Keratinocyte (primary cell): ENCODE measurements at regions of chr9 and their contacts with region 1.

Region 1: DNA sequence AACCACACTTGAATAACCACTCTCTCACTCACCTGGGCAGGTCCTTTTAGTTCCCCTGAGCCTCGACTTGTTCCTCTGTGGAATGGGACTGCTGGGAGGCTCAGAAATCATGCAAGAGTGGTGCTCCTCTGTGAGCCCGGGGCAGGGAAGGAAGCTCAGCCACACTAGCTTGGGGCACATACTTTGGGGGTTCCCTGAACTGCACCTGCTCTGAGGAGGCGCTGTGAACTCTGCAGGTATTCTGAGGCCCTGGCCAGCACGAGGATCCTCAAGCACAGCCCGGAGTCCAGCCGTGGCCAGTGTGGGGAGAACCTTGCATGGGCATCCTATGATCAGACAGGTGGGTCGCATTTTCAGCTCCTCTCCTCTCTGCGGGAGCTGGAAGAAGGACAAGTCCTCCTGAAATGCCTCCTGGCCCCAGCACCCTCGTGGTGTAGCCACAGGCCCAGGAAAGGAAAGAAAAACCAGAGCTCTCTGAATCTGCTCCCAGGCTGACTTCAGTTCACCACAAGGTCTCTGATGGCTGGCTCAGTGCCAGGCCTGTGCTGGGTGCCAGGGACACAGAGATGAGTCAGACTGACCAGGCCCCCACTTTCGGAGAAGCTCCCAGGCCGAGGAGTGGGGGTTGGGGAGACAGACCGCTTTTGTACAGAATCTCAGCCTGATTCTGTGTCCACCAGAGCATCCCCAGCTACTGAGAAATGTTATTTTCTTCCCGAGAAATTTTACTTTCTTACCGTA is 11.9 kb downstream of the GLIPR2 start:
- DNase-seq: no peak
- H3K4me3 ChIP-seq: no peak overlapping the region
- H3K27ac ChIP-seq: no peak overlapping the region
- H3K4me1 ChIP-seq: peaks cover 4% of the 10 kb centered on the region
- H3K27me3 ChIP-seq: peaks cover 4% of the 10 kb centered on the region
- CTCF ChIP-seq: no peak

Region 2: DNA sequence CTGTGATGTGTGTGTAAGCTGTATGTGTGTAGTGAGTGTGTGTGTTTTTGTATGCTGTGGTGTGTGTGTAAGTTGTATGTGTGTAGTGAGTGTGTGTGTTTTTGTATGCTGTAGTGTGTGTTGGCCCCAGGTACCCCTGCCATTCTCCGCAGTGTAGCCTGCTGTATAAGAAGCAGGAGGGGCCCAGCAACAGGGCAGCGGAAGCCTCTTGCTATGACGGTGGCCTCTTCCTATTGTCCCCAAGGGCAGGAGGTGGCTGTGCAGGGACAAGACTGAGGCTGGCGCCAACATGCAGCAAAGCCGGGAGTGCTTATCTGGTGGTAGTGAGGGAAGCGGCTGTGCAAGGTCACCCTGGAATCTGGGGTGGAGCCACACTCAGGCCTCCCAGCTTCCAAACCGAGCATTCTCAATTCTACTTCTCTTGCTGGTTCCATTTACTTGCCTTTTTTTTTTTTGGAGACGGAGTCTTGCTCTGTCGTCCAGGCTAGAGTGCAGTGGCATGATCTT is 234.1 kb before region 1 on chr9:
- dilution Hi-C with region 1: no loop called
- DNase-seq: no peak
- H3K4me3 ChIP-seq: no peak overlapping the region
- H3K27ac ChIP-seq: no peak overlapping the region
- H3K4me1 ChIP-seq: peaks cover 4% of the 10 kb centered on the region
- H3K27me3 ChIP-seq: no peaks in the 10 kb centered on the region
- CTCF ChIP-seq: no peak

Region 3: DNA sequence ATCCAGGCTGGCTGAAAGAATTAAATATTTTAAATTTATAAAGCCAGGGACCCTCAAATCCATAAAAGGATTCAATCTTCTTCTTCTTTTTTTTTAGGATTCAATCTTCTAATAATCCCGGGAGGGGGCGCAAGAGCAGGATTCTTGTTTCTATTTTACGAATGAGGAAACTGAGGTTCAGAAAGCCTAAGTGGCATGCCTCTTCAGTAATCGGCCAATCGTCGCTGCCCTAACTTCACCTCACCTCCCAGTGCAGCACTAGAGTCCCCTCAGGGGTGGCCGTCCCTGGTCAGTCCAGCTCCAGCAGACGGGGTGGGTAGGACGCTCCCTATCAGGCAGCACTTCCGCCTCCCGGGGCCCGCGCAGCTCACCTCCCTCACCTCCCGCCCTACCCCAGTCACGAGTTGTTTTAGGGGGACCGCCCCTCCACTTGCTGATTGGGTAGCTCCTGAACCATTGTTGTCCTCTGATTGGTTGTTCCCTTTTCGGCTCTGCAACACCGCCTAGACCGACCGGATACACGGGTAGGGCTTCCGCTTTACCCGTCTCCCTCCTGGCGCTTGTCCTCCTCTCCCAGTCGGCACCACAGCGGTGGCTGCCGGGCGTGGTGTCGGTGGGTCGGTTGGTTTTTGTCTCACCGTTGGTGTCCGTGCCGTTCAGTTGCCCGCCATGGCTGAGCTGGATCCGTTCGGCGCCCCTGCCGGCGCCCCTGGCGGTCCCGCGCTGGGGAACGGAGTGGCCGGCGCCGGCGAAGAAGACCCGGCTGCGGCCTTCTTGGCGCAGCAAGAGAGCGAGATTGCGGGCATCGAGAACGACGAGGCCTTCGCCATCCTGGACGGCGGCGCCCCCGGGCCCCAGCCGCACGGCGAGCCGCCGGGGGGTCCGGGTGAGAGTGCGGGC is 42.2 kb after region 1 on chr9 and contains the start of gene CLTA:
- dilution Hi-C with region 1: loop called (anchors 10 kb)
- DNase-seq: peak; percentile 91
- H3K4me3 ChIP-seq: peak within 1 kb of the TSS; percentile 71 to 87 (median 77)
- H3K27ac ChIP-seq: peak within 1 kb of the TSS; percentile 92
- H3K4me1 ChIP-seq: peaks cover 38% of the 10 kb centered on the region
- H3K27me3 ChIP-seq: no peaks in the 10 kb centered on the region
- CTCF ChIP-seq: peak; percentile 35 to 55 (median 49)
- polyA plus RNA-seq, gene CLTA: 231 to 325 TPM (median 290 TPM) in 3 replicates

Region 4: GRCh38 chr9:36258208-36258988 is 109.9 kb after region 1 on chr9 and contains the start of gene GNE:
- dilution Hi-C with region 1: no loop called
- DNase-seq: peak; percentile 53
- H3K4me3 ChIP-seq: peak within 1 kb of the TSS; percentile 77 to 82 (median 79)
- H3K27ac ChIP-seq: peak within 1 kb of the TSS; percentile 66
- H3K4me1 ChIP-seq: peaks cover 2% of the 10 kb centered on the region
- H3K27me3 ChIP-seq: no peaks in the 10 kb centered on the region
- CTCF ChIP-seq: no peak
- polyA plus RNA-seq, gene GNE: 7.7 to 11.7 TPM (median 10.1 TPM) in 3 replicates